K562 (cell line): ENCODE measurements at regions of chr6 and their contacts with region 1.

Region 1: DNA sequence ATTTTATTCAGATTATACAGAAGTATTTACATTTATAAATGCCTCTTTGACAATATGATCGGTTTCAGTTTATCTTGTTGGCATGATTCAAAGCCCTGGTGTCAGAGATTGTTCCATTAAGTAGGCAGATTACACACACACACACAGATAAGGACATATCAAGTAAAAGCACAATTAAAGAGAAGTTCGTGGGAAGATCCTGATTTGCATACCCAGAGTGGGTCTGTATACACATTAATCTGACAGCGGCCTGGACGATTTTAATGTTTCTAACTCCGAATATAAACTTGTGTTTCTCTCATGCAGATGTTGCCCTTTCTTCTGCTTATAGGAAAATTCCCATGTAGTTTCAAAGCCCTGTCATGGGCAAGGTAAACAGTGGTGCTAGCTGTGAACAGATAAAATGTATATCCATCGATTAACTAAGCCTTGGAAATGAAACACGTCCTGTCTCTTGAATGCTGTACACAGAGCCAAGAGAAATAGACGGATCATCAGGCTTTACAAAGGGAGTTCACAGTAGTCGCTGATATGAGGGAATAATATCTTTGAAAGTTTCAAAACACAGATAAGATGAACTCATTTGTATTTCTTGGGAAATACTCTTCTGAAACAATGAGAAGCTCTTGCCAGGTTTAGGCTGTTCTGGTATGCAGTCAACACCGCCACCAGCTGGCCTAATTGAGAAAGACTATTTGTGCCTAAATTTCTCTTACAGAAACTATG is 108.2 kb upstream of the GMDS start:
- DNase-seq: peak; percentile 56 to 73 (median 59)
- ATAC-seq: peak; percentile 90
- H3K4me3 ChIP-seq: no peak overlapping the region
- H3K27ac ChIP-seq: no peak overlapping the region
- H3K4me1 ChIP-seq: no peaks in the 10 kb centered on the region
- H3K27me3 ChIP-seq: no peaks in the 10 kb centered on the region; a peak in 2 of 5 replicates
- CTCF ChIP-seq: peak; percentile 72 to 96 (median 80)
- EP300 ChIP-seq: no peak
- POLR2A ChIP-seq: no peak
- RAD21 ChIP-seq: peak; percentile 90 to 93

Region 2: DNA sequence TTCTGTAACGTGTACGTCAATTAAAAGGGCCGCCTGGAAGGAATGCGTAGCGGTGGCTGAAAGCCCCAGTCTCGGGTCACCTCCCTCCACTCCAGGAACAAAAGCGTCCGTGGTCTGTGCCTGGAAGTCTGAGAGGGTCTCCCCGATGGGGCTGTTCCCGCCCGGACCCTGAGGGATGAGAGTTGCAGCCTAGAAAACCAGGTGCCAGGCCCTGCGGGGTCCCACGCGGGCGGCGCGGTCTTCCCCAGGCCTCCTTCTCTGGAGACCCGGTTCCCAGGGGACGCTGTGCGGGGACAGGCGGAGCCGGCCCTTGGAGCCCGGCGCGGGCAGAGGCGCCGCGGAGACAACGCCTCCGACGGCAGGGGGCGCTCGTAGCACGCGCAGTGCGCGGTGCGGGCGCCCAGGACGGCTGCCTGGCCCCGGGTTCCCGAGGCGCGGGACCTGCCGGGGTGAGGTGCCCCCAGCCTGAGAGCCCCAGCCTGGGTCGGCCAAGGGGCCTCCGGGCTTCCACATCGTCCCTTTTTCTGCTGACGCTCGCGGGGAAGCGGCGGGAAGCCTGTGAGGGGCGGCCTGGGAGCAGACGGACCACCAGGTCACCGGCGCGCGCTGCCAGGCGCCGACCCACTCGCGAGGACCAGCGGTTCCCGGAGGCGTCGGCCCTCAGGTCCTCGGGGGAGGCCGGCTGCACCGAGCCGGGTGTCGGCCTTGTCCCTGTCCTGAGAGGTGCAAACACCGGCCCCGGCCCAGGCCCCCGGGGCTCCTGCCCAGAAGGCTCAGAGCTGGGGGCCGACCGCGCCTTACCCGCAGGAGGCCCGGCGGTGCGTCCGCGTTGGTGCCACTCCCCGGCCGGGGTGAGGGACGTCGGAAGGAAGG is 749.2 kb before region 1 on chr6:
- CTCF ChIA-PET with region 1: interaction called, 6 read pairs
- POLR2A ChIA-PET with region 1: no interaction called
- in situ Hi-C with region 1: loop called (anchors 10 kb)
- intact Hi-C with region 1: loop called (anchors 1 kb)
- DNase-seq: peak; percentile 72 to 88 (median 86)
- ATAC-seq: peak; percentile 99
- H3K4me3 ChIP-seq: no peak overlapping the region
- H3K27ac ChIP-seq: no peak overlapping the region
- H3K4me1 ChIP-seq: peaks cover 0 to 18% of the 10 kb centered on the region in 2 experiments; a peak in 1 of 5 replicates
- H3K27me3 ChIP-seq: peaks cover 68 to 82% of the 10 kb centered on the region in 2 experiments
- CTCF ChIP-seq: peak; percentile 75 to 95 (median 88)
- EP300 ChIP-seq: no peak
- POLR2A ChIP-seq: no peak
- RAD21 ChIP-seq: peak; percentile 99

Region 3: GRCh38 chr6:1802491-1803395 is 550.8 kb before region 1 on chr6:
- CTCF ChIA-PET with region 1: no interaction called
- POLR2A ChIA-PET with region 1: no interaction called
- in situ Hi-C with region 1: no loop called
- intact Hi-C with region 1: no loop called
- DNase-seq: no peak
- ATAC-seq: no peak
- H3K4me3 ChIP-seq: no peak overlapping the region
- H3K27ac ChIP-seq: no peak overlapping the region
- H3K4me1 ChIP-seq: no peaks in the 10 kb centered on the region; a peak in 1 of 5 replicates
- H3K27me3 ChIP-seq: peaks cover 10 to 29% of the 10 kb centered on the region in 2 experiments
- CTCF ChIP-seq: no peak
- EP300 ChIP-seq: no peak
- POLR2A ChIP-seq: no peak
- RAD21 ChIP-seq: no peak

Region 4: GRCh38 chr6:2103644-2104523 is 249.7 kb before region 1 on chr6:
- CTCF ChIA-PET with region 1: no interaction called
- POLR2A ChIA-PET with region 1: no interaction called
- in situ Hi-C with region 1: no loop called
- intact Hi-C with region 1: loop called (anchors 10 kb)
- DNase-seq: peak in 2 of 4 experiments; percentile 17 to 23
- ATAC-seq: peak; percentile 85
- H3K4me3 ChIP-seq: no peak overlapping the region
- H3K27ac ChIP-seq: no peak overlapping the region
- H3K4me1 ChIP-seq: no peaks in the 10 kb centered on the region
- H3K27me3 ChIP-seq: no peaks in the 10 kb centered on the region
- CTCF ChIP-seq: peak; percentile 38 to 75 (median 59); a peak in 5 of 6 replicates
- EP300 ChIP-seq: no peak
- POLR2A ChIP-seq: no peak
- RAD21 ChIP-seq: peak; percentile 86 to 92

Region 5: DNA sequence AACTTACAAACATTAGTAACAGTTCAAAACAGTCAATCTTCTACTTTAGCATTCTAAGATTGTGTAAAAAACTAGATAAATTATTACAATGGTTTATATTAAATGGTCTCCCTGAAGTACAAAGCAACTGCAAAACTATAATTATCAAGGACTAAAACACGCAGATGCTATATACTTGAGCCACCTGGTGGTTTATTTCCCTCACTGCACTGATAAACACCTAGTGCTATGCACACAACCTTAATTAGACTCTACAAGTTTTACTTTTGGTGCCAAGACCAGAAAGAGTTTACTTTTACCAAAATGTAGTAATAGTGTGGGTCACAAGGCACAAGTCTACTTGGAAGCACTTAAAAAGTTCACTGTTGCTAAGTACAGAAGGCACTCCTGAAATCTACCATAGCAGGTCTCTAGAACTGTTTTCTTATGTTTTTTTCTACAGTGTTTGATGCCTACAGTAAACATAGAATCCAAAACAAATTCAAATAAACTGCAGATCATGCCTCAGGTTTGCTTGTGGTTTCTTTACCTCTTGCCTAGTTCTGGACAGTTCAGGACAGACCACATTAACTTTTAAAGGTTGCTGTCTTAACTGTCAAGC is 157.4 kb before region 1 on chr6:
- CTCF ChIA-PET with region 1: interaction called, 7 read pairs
- POLR2A ChIA-PET with region 1: no interaction called
- in situ Hi-C with region 1: no loop called
- intact Hi-C with region 1: loop called (anchors 1 kb)
- DNase-seq: peak; percentile 31 to 61 (median 49)
- ATAC-seq: peak; percentile 88
- H3K4me3 ChIP-seq: no peak overlapping the region
- H3K27ac ChIP-seq: no peak overlapping the region
- H3K4me1 ChIP-seq: no peaks in the 10 kb centered on the region; a peak in 1 of 5 replicates
- H3K27me3 ChIP-seq: peaks cover 0 to 14% of the 10 kb centered on the region in 2 experiments; a peak in 1 of 5 replicates
- CTCF ChIP-seq: peak; percentile 52 to 74 (median 71); a peak in 5 of 6 replicates
- EP300 ChIP-seq: no peak
- POLR2A ChIP-seq: no peak
- RAD21 ChIP-seq: peak; percentile 85 to 91

Region 6: DNA sequence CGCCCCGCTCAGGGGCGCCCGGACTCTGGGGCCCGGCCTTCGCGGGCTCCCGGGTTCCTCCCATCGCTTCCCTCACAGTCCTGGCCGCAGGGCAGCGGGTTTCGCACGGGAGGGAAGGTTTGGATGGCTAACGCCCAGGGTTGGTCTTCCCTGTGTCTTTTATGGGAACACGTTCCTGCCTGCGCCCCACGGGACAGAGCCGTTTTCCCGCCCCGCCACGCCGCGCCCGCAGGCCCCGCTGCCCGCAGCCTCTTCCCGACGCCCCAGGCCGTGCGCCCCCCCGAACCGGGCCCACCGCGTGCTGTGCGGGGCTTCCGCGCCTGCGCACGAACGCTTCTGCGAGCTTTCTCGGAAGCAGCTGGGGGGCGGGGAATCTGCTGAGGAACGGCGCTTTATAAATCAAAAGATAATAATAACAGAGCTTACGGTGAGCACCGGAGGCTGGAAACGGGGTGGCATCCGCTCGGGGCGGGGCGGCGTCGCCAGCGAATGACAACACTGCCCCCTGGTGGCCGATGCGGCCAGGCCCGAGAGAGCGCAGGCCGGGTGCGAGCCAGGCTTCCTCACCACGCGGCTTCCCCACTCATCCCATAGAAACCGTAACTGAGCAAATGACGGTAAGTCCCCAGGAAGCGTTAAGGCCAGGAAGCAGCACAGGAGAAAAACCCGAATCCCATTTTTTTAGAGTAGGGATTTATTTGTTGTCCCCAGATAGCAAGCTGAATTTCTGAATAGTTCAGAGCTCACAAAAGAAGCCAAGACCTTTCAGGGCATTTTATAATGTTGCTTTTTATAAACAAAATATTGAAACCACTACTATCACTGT is 280.8 kb after region 1 on chr6:
- CTCF ChIA-PET with region 1: no interaction called
- POLR2A ChIA-PET with region 1: no interaction called
- in situ Hi-C with region 1: no loop called
- intact Hi-C with region 1: loop called (anchors 2 kb)
- DNase-seq: peak; percentile 85 to 94 (median 90)
- ATAC-seq: peak; percentile 99
- H3K4me3 ChIP-seq: no peak overlapping the region
- H3K27ac ChIP-seq: no peak overlapping the region
- H3K4me1 ChIP-seq: peaks cover 0 to 8% of the 10 kb centered on the region in 2 experiments; a peak in 2 of 5 replicates
- H3K27me3 ChIP-seq: peaks cover 46 to 78% of the 10 kb centered on the region in 2 experiments; a peak in 4 of 5 replicates
- CTCF ChIP-seq: peak; percentile 96 to 97 (median 96)
- EP300 ChIP-seq: no peak
- POLR2A ChIP-seq: no peak
- RAD21 ChIP-seq: peak; percentile 97

Region 7: DNA sequence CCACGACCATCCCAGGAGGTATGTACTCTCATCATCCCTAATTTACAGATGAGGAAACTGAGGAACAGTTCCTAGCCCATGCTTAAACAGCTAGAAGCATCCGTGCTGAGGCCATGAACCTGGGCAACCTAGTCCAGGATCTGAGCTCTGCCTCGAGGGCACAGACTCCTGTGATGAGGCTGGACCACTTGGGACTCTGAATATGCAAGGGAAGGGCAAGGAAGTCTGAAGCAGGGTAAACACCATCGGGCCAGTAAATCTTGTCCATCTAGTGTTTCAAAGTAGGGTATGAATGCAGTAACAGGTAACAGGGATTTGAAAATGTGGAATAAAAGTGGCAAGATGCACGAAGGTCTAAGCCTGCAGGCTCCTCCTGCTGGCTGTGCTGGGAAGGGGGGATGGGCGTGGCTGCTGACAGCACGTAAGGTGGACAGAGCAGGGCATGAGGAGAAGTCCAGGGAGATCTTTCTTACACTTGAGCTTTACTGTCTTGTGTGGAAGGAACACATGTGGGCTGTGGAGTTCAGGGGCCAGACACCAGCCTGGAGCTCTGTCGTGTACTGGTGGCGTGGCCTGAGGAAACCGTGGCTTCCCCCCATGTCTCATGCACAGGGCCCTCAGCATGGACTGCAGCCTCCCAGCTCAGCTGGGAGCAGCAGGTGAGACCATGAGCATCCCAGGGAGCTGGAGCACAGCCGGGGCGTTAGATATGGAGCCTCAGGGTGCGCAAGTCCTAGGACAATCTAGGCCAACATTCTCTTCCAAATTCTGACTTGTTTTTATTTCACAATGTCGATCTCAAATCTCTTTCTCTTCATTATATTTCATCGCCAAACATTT is 1018.7 kb after region 1 on chr6:
- CTCF ChIA-PET with region 1: no interaction called
- POLR2A ChIA-PET with region 1: no interaction called
- in situ Hi-C with region 1: no loop called
- intact Hi-C with region 1: no loop called
- DNase-seq: peak; percentile 64 to 74 (median 67)
- ATAC-seq: peak; percentile 94
- H3K4me3 ChIP-seq: no peak overlapping the region
- H3K27ac ChIP-seq: no peak overlapping the region
- H3K4me1 ChIP-seq: peaks cover 6 to 10% of the 10 kb centered on the region in 2 experiments; a peak in 4 of 5 replicates
- H3K27me3 ChIP-seq: no peaks in the 10 kb centered on the region
- CTCF ChIP-seq: peak; percentile 62 to 79 (median 73)
- EP300 ChIP-seq: no peak
- POLR2A ChIP-seq: no peak
- RAD21 ChIP-seq: peak; percentile 42 to 77; a peak in 3 of 4 replicates